Activated naive CD4-positive, alpha-beta T cell treated with anti-CD3 and anti-CD28 coated beads for 36 hours (primary cell): ENCODE measurements at regions of chr9 and their contacts with region 1.

Region 1: DNA sequence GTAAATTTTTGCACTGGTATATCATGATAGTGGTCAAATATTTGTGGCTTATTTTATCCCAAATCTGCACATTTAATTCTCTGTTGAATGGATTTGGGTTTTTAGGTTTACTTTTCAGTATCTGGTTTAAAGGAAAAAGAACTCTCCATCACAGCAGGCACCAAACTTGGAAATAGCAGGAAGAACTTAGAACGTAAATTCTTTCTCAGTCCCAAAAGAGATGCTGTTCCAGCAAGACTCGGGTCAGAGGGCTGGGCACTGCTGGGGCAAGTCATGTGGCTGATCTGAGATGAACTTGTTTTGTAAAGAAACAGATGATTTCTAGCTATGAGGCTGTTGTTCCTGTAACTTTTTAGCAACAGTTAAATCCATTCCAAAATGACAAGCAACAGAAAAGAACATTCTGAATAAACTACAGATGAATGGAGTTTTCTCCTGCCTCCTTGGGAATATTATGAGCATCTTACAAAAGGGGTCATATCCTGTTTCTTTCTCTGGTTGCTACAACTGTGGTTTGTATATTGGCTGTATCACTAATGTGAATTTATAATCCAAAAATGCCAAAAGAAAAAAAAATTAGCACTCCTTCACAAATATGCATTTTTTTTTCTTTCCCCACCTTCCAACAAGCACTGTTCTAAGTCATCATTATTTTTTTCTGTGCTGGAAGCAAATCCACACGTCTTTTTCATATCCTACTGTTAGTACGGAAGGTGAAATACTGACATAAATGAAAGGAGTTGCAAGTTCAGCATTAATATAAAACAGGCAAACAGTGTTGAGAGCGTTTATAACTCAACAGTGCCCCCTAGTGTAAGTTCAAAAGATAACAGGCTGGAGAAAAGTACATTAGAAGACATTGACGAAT is 31.1 kb downstream of the OR2K2 start:
- DNase-seq: no peak
- H3K4me3 Mint-ChIP-seq: no peak overlapping the region
- H3K27ac Mint-ChIP-seq: no peak overlapping the region
- H3K4me1 Mint-ChIP-seq: no peaks in the 10 kb centered on the region
- H3K27me3 Mint-ChIP-seq: peaks cover 3% of the 10 kb centered on the region

Region 2: DNA sequence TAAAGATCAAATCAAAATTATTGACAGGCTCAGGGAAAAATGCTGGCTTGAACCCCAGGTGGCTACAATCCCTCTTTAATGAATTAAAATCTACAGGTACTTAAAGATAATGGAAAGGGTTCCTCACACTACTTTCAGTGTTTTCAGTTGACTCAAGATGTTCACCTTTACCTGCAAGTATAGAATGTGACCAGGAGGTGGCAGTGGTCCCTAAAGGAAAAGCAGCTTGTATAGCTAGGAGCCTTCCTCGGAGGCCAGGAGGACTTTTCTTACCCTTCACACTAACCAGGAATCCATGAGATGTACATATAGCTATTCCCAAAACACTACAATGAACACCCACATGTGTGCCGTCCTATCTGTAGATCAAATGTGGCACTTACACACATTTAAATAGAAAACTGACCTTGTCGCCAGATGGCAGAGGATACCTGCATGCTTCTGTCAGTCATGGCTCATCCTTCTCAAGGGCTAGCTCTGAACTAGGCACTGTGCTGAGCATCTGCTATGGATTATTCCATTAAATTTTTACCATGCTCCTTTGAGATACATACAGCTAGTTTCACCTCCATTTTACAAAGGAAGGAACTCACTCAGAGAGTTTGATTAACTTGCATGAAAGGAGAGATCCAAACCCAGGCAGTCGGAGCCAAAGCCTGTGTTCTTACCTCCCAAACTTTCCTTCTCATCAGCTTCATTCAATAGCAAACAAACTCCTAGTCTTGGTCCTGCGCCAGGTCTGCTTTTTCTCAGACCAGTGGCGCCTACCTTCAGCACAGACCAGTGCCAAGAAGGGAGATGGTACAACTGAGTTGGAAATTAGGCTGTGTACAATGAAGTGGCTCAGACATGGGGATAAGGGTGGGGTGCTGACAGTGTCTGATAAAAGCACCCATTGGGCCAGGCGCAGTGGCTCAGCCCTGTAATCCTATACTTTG is 1115.5 kb before region 1 on chr9:
- CTCF ChIA-PET with region 1: no interaction called
- intact Hi-C with region 1: loop called (anchors 1 kb)
- DNase-seq: peak; percentile 82
- H3K4me3 Mint-ChIP-seq: no peak overlapping the region
- H3K27ac Mint-ChIP-seq: no peak overlapping the region
- H3K4me1 Mint-ChIP-seq: no peaks in the 10 kb centered on the region
- H3K27me3 Mint-ChIP-seq: no peaks in the 10 kb centered on the region

Region 3: DNA sequence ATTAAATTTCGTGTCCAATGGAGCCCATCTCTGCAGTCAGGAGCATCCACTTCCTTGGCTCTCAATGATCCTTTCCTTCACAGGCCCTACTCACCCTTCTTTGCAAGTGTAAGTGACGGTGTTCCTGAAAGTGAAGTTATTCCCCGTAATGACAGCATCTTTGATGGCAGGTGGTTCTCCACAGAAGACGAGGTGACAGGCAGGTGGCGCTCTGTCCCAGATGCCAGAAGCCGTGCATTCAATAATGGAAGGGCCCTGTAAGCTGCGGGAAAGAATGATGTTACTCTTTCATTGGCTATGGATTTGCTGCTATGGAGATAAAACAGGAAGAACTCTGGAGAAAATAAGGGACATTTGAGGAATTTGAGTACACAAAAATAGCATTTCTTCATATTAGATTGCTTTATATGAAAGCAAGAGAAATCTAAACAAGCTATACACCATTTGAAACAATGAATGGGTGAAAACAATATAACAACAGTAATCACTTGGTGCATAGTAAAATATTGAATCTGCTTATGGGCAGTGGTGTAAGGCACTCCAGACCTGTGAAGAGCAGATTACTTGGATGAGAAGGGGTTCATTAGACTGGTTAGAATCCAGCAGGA is 871.4 kb before region 1 on chr9:
- CTCF ChIA-PET with region 1: no interaction called
- intact Hi-C with region 1: loop called (anchors 5 kb)
- DNase-seq: peak; percentile 63
- H3K4me3 Mint-ChIP-seq: no peak overlapping the region
- H3K27ac Mint-ChIP-seq: no peak overlapping the region
- H3K4me1 Mint-ChIP-seq: no peaks in the 10 kb centered on the region
- H3K27me3 Mint-ChIP-seq: no peaks in the 10 kb centered on the region

Region 4: GRCh38 chr9:110452227-110452801 is 846.7 kb before region 1 on chr9:
- CTCF ChIA-PET with region 1: no interaction called
- intact Hi-C with region 1: loop called (anchors 5 kb)
- DNase-seq: no peak
- H3K4me3 Mint-ChIP-seq: no peak overlapping the region
- H3K27ac Mint-ChIP-seq: no peak overlapping the region
- H3K4me1 Mint-ChIP-seq: no peaks in the 10 kb centered on the region
- H3K27me3 Mint-ChIP-seq: peaks cover 7% of the 10 kb centered on the region

Region 5: DNA sequence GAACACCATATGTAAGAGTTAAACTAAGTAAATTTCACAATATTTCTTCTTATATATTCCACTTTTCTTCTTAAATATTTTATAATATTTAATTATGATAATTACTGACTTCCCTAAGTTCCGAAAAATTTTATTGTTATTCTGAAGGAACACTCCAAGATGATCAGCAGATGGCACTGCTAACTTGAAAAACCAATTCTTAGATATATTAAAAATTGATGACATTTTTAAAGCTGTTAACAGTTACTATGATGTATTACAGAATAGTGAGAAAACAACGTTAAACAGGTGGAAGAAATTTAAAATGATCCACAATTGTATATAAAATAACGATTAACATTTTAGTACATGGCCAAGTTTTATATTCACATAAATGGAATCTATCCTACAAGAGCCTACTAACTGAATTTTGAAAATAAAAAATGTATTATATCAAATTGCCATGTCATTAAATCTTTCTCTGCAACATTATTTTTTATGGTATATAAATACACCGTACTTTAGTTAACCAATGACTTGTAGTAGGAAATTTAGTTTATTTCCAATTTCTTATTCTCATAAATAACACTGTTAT is 660.5 kb before region 1 on chr9:
- CTCF ChIA-PET with region 1: no interaction called
- intact Hi-C with region 1: loop called (anchors 5 kb)
- DNase-seq: no peak
- H3K4me3 Mint-ChIP-seq: no peak overlapping the region
- H3K27ac Mint-ChIP-seq: no peak overlapping the region
- H3K4me1 Mint-ChIP-seq: no peaks in the 10 kb centered on the region
- H3K27me3 Mint-ChIP-seq: peaks cover 5% of the 10 kb centered on the region

Region 6: GRCh38 chr9:111037381-111038305 is 261.3 kb before region 1 on chr9:
- CTCF ChIA-PET with region 1: no interaction called
- intact Hi-C with region 1: loop called (anchors 5 kb)
- DNase-seq: no peak
- H3K4me3 Mint-ChIP-seq: no peak overlapping the region
- H3K27ac Mint-ChIP-seq: no peak overlapping the region
- H3K4me1 Mint-ChIP-seq: peaks cover 10% of the 10 kb centered on the region
- H3K27me3 Mint-ChIP-seq: peaks cover 41% of the 10 kb centered on the region

Region 7: GRCh38 chr9:111179577-111179976 is 119.4 kb before region 1 on chr9:
- CTCF ChIA-PET with region 1: no interaction called
- intact Hi-C with region 1: no loop called
- DNase-seq: no peak
- H3K4me3 Mint-ChIP-seq: no peak overlapping the region
- H3K27ac Mint-ChIP-seq: no peak overlapping the region
- H3K4me1 Mint-ChIP-seq: no peaks in the 10 kb centered on the region
- H3K27me3 Mint-ChIP-seq: peaks cover 7% of the 10 kb centered on the region

Region 8: GRCh38 chr9:111212874-111213273 is 86.1 kb before region 1 on chr9:
- CTCF ChIA-PET with region 1: no interaction called
- intact Hi-C with region 1: no loop called
- DNase-seq: no peak
- H3K4me3 Mint-ChIP-seq: no peak overlapping the region
- H3K27ac Mint-ChIP-seq: no peak overlapping the region
- H3K4me1 Mint-ChIP-seq: no peaks in the 10 kb centered on the region
- H3K27me3 Mint-ChIP-seq: peaks cover 3% of the 10 kb centered on the region

Region 9: GRCh38 chr9:111412280-111412679 is 113.3 kb after region 1 on chr9:
- CTCF ChIA-PET with region 1: no interaction called
- intact Hi-C with region 1: no loop called
- DNase-seq: no peak
- H3K4me3 Mint-ChIP-seq: no peak overlapping the region
- H3K27ac Mint-ChIP-seq: no peak overlapping the region
- H3K4me1 Mint-ChIP-seq: no peaks in the 10 kb centered on the region
- H3K27me3 Mint-ChIP-seq: no peaks in the 10 kb centered on the region